ENCODE measurements at regions of chr10 and their contacts with region 1.

Region 1: GRCh38 chr10:13206546-13207443 is 27.4 kb downstream of the UCMA start:
- DNase-seq: no peak
- H3K4me3 ChIP-seq: no peak overlapping the region
- CTCF ChIP-seq: peak; percentile 53

Region 2: DNA sequence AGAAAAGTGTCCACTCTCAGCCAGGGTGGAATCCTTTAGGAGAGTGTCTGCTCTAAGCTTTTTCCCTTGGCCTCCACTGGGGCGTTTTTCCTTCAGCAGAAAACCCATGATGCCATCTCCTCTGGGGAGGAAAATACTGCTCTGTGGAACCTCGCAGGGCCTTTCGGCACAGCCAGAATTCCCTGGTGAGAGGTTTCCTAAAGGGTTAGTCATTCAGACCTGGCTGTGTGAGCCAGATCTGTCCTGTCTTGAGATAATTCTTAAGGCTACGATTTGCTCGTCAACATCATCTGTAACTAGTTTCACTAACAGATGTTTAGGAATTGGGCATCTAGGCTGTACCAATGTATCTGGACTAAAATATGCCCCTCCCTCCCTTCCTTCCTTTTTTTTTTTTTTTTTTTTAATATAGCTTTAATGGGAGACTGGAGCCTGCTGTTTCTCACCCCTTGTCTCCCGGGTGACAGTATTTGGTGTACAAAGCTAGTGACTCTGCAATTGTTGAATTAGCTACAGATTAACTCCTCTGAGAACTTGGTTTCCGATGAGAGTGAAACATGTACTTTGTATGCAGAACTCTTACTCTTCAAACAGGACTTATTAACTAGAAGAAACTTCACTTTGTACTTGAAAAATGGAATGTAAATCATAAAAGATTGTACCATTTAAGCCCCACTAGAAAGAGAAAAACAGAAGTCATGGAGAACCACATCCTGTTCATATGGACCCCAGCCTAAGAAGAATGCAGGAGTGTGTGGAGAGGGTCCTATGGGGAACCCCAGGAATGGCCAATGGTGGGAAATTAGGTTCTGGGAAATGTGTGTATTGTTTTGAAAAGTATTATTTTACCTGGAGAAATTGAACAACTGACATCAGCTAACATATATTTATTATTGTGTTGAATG is 626.6 kb before region 1 on chr10:
- CTCF ChIA-PET with region 1: no interaction called
- POLR2A ChIA-PET with region 1: no interaction called
- DNase-seq: no peak
- H3K4me3 ChIP-seq: no peak overlapping the region
- CTCF ChIP-seq: no peak

Region 3: DNA sequence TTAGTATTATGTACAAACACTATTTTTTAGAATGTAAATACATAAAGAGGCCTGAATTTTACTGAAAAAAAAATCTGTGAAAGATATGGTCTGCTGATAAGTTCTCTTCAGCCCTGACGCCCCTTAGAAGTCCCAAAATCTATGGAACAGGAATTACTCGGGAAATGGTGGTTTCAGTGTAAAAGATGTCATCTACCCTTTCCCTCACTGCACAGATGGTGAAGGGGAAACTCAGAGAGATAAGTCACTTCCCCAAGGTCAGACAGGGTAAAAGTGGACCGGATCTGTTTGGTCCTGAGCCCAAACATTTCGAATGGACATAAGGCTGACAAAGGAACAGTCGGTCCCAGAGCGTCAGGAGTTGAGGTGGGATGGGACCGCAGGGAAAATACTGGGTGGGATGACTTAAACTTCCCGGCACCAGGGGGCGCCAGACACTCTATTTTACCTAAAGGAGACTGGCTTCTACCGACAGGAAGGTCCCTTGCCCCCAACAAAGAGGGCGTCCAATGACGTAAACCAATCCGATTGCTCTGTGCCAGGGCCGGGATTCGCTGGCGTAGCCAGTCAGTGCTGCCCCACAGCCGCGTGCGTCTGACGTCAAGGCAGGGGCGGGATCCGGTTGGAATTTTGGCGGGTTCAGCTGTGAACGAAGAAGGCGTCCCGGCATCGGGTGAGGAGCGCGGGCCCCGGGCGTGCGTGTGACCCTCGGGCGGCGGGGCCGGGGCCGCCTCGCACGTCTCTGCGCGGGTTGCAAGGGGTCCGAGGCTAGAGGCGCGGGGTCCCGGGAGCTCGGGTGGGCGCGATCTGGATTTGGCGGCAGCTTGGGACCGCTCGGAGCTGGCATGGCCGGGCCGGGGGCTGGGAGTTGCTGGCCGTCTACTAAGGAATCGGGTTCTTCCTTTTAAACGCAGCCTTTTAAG is 45.6 kb before region 1 on chr10 and contains the start of gene MCM10:
- CTCF ChIA-PET with region 1: interaction called, 10 read pairs
- POLR2A ChIA-PET with region 1: no interaction called
- DNase-seq: peak; percentile 97
- H3K4me3 ChIP-seq: peak within 1 kb of the TSS; percentile 67
- CTCF ChIP-seq: peak; percentile 82

Region 4: GRCh38 chr10:13195016-13195415 is 11.8 kb before region 1 on chr10:
- CTCF ChIA-PET with region 1: interaction called, 10 read pairs
- POLR2A ChIA-PET with region 1: no interaction called
- DNase-seq: no peak
- H3K4me3 ChIP-seq: no peak overlapping the region
- CTCF ChIP-seq: no peak

Region 5: DNA sequence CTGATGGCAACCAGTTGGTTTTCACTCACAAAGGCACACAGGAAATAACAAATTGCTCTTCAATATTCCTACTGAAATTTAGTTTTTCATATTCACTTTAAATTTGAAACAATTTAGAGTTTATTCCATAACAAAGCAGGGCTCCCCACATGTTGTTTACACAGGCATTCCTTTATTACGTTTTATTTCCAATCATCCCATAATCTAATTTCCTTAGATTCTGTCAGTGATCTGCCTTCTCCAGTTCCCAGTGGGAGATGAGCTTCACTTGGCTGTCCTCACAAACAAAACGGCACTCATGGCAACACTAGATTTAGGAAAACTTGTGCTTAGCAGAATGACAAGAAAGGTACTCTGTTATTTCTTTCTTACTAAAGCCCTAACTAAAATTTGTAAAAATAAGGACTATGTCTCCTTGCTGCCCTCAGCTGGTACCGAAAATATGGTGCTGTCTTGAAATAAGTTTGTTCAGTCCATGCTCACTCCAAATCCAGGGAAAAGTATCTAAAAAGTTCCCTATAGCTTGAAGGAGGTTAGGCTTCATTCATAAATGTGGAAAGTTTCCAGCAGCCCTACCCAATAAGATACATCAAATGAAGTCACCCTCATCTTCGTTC is 70.1 kb after region 1 on chr10:
- CTCF ChIA-PET with region 1: interaction called, 18 read pairs
- POLR2A ChIA-PET with region 1: no interaction called
- DNase-seq: no peak
- H3K4me3 ChIP-seq: no peak overlapping the region
- CTCF ChIP-seq: no peak

Region 6: GRCh38 chr10:13327534-13327933 is 120.7 kb after region 1 on chr10:
- CTCF ChIA-PET with region 1: no interaction called
- POLR2A ChIA-PET with region 1: no interaction called
- DNase-seq: no peak
- H3K4me3 ChIP-seq: no peak overlapping the region
- CTCF ChIP-seq: no peak

Measured in AG04449 (cell line).